ENCODE measurements at regions of chr7 and their contacts with region 1.

Region 1: DNA sequence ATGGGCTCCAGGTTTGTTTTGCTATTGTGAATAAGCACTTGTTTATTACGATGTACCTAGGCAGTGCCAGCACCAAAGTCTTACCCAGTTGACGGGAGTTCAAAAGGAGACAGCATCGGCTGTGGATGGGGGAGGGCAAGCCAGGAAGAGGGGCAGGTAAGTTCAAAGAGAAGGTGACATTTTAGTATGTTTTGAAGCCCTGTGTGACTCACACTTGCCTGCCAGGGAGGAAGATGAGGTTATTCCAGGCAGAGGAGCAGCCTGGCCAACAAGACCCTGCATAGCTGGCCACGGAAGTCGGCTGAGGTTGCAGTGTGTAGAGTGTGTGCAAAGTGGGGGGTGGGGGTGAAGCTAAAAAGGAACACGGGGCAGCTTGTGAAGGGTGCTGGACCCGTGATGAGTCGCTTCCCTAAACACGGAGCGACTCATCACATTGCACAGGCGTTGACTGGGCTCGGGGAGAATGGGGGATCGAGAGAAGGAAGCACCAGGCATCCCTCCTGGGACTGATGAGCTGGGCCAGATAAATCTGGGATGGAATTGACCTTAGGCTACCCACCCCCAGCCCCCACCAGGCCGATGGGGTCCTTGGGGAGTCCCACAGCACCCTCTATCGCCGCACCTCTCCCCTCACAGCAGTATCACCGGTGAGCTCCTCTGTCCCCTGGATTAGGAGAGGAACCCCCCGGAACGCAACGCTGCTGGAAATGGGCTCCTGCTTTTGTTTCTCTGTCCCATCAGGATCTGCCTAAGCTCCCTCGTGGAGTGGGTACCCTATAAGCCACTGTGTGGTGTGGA is 97.9 kb upstream of the IKZF1 start:
- DNase-seq: peak; percentile 92
- H3K4me3 Mint-ChIP-seq: peak overlapping the region; percentile 51
- H3K27ac Mint-ChIP-seq: peak overlapping the region; percentile 92
- H3K4me1 Mint-ChIP-seq: peaks cover 86% of the 10 kb centered on the region
- H3K27me3 Mint-ChIP-seq: no peaks in the 10 kb centered on the region

Region 2: DNA sequence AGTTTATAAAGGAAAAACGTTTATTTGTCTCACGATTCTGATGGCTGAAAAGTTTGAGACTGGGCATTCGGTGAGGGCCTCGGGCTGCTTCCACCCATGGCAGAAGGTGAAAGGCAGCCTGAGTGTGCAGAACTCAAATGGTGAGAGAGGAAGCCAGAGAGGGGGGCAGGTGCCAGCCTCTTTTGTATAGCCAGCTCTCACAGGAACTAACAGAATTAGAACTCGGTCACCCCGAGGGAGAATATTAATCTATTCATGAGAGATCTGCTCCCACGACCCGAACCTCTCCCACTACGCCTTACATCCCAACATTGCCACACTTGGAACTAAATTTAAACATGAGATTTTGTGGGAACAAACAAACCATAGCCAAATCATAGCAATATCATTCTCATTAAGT is 226.2 kb before region 1 on chr7:
- CTCF ChIA-PET with region 1: no interaction called
- intact Hi-C with region 1: no loop called
- DNase-seq: peak; percentile 31
- H3K4me3 Mint-ChIP-seq: no peak overlapping the region
- H3K27ac Mint-ChIP-seq: no peak overlapping the region
- H3K4me1 Mint-ChIP-seq: no peaks in the 10 kb centered on the region
- H3K27me3 Mint-ChIP-seq: no peaks in the 10 kb centered on the region

Region 3: GRCh38 chr7:50092579-50093491 is 113.8 kb before region 1 on chr7 and contains the start of gene ZPBP:
- CTCF ChIA-PET with region 1: interaction called, 7 read pairs
- intact Hi-C with region 1: loop called (anchors 1 kb)
- DNase-seq: peak; percentile 67
- H3K4me3 Mint-ChIP-seq: peak within 1 kb of the TSS; percentile 76
- H3K27ac Mint-ChIP-seq: peak within 1 kb of the TSS; percentile 81
- H3K4me1 Mint-ChIP-seq: peaks cover 7% of the 10 kb centered on the region
- H3K27me3 Mint-ChIP-seq: no peaks in the 10 kb centered on the region
- total RNA-seq, gene ZPBP: not detected

Region 4: GRCh38 chr7:50227726-50228125 is 21.1 kb after region 1 on chr7:
- CTCF ChIA-PET with region 1: interaction called, 39 read pairs
- intact Hi-C with region 1: loop called (anchors 1 kb)
- DNase-seq: no peak
- H3K4me3 Mint-ChIP-seq: peak overlapping the region; percentile 64
- H3K27ac Mint-ChIP-seq: peak overlapping the region; percentile 81
- H3K4me1 Mint-ChIP-seq: peaks cover 37% of the 10 kb centered on the region
- H3K27me3 Mint-ChIP-seq: no peaks in the 10 kb centered on the region

Region 5: GRCh38 chr7:50317221-50317678 is 110.6 kb after region 1 on chr7:
- CTCF ChIA-PET with region 1: interaction called, 84 read pairs
- intact Hi-C with region 1: loop called (anchors 1 kb)
- DNase-seq: peak; percentile 77
- H3K4me3 Mint-ChIP-seq: peak overlapping the region; percentile 71
- H3K27ac Mint-ChIP-seq: peak overlapping the region; percentile 99
- H3K4me1 Mint-ChIP-seq: peaks cover 90% of the 10 kb centered on the region
- H3K27me3 Mint-ChIP-seq: no peaks in the 10 kb centered on the region

Region 6: DNA sequence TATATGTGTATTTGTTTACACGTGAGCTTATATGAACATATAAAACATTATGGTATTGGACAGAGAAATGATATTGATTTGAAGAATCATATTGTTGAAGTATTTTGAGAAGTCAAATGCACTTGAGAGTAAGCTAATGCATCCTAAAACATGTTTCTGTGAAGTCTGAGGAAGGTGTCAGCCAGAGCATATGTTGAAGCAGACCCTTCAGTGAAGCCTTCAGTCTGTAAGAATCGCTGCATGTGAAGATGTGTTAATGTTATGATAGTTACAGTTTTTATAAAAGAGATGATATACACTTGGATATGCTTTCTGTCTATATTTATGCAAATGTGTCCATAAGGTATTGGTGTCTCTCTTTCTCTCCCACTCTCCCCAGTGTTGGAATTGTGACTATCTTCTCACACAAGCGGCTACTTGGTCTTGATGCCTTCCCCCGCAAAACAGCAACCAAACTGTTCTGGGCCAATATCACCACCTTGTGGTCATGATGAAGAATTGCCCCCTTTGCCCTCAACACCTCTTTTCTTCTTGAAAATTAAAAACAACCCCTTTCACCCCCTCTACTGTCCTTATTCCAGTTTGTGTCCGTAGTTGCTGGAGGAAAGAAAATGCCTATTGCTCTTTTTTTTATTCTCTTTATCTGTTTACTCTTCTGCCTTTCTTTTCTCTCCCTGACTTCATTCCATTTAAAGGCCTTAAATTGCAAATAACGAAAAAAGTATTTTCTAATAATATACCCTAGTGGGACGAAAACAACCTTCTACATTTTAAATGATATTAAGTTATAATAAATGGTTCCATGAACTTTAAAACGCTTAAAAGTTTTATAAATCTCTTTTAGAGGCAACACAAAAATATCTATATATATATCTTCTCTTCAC is 162.7 kb after region 1 on chr7:
- CTCF ChIA-PET with region 1: interaction called, 65 read pairs
- intact Hi-C with region 1: loop called (anchors 1 kb)
- DNase-seq: peak; percentile 67
- H3K4me3 Mint-ChIP-seq: no peak overlapping the region
- H3K27ac Mint-ChIP-seq: peak overlapping the region; percentile 92
- H3K4me1 Mint-ChIP-seq: peaks cover 96% of the 10 kb centered on the region
- H3K27me3 Mint-ChIP-seq: no peaks in the 10 kb centered on the region

Region 7: DNA sequence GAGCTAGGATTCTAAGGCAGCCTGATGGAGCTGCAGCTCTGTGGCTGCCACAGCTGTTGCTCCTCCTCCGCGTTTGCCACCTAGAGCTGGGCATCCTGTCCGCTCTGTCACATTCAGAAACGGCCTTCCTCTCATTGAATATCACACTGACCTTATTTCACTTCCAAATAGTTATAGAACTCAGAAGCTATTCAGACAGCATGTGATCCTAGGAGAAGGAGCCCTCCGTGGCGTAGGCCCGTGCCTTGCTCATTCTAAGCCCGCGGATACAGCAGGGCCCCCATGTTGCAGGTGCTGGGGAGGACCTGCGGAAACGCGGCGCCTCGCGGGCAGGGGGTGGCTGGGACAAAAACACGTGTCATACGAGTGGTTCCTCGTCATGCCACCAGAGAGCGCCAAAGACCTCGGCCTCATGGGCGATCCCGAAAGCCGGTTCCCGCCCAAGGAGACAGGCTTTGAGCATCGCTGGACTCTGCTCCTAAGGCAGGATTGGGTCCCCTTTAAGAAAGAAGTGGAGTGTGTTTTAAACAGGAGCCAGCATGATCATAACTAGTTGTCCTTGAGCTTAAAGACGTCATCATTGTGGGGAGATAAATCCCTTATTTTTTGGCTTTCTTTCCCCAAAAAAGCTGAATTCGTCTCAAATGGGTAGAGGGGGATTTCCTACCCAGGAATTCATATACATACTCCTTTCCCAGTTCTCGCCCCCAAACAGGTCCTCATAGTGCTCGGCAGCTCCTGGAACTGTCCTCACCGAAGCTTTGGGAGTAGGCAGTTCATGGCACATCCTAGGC is 261.4 kb after region 1 on chr7:
- CTCF ChIA-PET with region 1: interaction called, 9 read pairs
- intact Hi-C with region 1: loop called (anchors 1 kb)
- DNase-seq: peak; percentile 90
- H3K4me3 Mint-ChIP-seq: no peak overlapping the region
- H3K27ac Mint-ChIP-seq: no peak overlapping the region
- H3K4me1 Mint-ChIP-seq: peaks cover 9% of the 10 kb centered on the region
- H3K27me3 Mint-ChIP-seq: no peaks in the 10 kb centered on the region

Measured in activated naive CD4-positive, alpha-beta T cell treated with anti-CD3 and anti-CD28 coated beads for 36 hours (primary cell).